ENCODE measurements at regions of chr6 and their contacts with region 1.

Region 1: DNA sequence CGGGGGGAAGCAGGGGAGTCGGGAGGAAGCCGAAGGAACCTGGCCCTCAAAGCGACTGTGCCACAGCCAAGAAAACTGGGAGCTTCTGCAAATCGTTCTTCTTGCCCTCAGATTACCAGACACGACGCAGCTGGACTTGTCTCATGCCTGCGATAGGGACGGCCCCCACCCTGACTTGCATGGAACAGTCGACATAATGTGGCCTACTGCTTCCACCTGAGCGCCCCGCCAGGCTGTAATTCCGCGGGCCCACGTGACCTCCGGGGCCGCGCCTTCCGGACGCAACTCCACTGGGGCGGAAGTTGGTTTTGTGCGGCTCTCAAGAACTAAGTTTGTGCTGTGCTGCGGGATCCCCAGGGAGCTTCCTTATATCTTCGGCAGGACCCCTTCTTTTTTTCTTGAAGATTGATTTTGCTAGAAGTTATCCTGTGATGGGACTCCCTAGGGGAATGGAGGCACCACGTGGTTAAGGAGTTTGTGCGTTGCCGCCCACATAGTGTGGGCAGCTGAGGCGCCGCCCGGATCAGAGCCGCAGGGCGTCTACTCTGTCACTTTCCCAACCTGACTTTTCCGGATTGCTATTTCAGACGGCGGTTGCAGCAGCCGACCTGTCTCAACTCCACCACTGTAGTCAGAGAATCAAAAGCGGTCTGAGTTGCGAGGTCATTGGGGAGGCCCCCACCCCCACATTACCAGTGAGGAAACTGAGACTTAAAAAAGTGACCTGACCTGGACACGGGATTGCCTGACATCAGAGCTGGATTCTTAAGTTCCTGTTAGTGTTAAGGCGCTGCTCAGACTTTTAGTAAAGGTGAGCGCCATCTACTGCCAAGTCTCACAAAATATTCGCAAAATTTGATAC is 540 bp upstream of the CD164 start:
- DNase-seq: peak; percentile 94
- H3K4me3 ChIP-seq: peak overlapping the region; percentile 33 to 99 (median 64)
- H3K27ac ChIP-seq: peak overlapping the region; percentile 97 to 100 (median 99)
- H3K4me1 ChIP-seq: peaks cover 11 to 47% (median 30%) of the 10 kb centered on the region in 4 donors
- H3K27me3 ChIP-seq: no peaks in the 10 kb centered on the region
- CTCF ChIP-seq: peak; percentile 31 to 73 (median 49)
- EP300 ChIP-seq: no peak
- POLR2A ChIP-seq: peak; percentile 73

Region 2: DNA sequence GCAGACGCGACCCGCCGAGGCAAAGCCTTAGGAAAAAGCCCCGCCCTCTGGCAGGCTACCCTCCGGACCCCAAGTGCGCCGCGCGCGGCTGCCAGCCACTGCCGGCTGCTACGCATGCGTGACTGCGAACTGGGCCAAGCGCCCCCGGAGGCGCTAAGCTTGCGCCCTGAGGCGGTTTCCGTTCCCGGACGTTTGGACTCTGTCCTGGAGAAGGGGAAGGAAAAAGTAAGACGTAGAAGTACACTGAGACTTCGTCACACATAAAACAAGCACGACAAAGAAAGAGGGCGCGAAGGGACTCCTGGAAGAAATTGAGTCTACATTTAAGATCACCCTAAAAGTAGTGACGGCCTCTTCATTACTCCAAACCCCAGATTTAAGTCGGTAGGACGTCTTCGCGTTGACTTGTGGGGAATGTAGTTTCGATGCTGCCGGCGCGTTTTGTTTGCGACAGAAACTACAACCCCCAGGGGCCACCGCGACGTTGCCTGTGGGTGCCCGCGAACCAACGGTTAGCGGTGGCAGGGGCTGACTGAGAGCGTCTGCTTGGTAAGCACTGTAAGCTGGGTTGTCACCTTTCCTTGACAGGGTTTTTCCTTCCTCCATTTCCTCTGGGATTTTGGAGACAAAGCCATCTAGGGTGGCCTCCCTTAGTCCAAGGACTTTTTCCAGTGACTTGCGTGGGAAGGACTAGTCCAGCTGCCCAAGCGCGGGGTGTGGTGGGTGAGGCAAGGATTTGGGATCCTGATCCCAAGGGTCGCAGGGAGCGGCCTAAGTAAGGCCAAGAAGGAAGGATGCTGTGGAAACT is 287.6 kb before region 1 on chr6 and contains the start of gene CEP57L1:
- in situ Hi-C with region 1: loop called in 2 of 4 experiments (anchors 10 kb)
- intact Hi-C with region 1: no loop called
- DNase-seq: peak; percentile 98
- H3K4me3 ChIP-seq: peak within 1 kb of the TSS; percentile 49 to 80 (median 67)
- H3K27ac ChIP-seq: peak within 1 kb of the TSS; percentile 95 to 100 (median 99)
- H3K4me1 ChIP-seq: peaks cover 7 to 57% (median 34%) of the 10 kb centered on the region in 4 donors
- H3K27me3 ChIP-seq: no peaks in the 10 kb centered on the region
- CTCF ChIP-seq: peak in 2 of 5 experiments; percentile 11 to 27
- EP300 ChIP-seq: no peak
- POLR2A ChIP-seq: peak; percentile 12
- total RNA-seq, gene CEP57L1: 1.9 to 29.5 (median 9.5) TPM

Region 3: GRCh38 chr6:109103942-109104341 is 278.9 kb before region 1 on chr6:
- in situ Hi-C with region 1: loop called in 2 of 4 experiments (anchors 10 kb)
- intact Hi-C with region 1: no loop called
- DNase-seq: no peak
- H3K4me3 ChIP-seq: no peak overlapping the region
- H3K27ac ChIP-seq: no peak overlapping the region
- H3K4me1 ChIP-seq: peaks cover 0 to 6% (median 0%) of the 10 kb centered on the region in 4 donors
- H3K27me3 ChIP-seq: no peaks in the 10 kb centered on the region
- CTCF ChIP-seq: no peak
- EP300 ChIP-seq: no peak
- POLR2A ChIP-seq: no peak

Region 4: GRCh38 chr6:109187399-109188114 is 195.2 kb before region 1 on chr6:
- in situ Hi-C with region 1: loop called (anchors 5 to 25 kb)
- intact Hi-C with region 1: loop called (anchors 5 kb)
- DNase-seq: peak; percentile 72
- H3K4me3 ChIP-seq: no peak overlapping the region
- H3K27ac ChIP-seq: no peak overlapping the region
- H3K4me1 ChIP-seq: peaks cover 0 to 14% (median 1%) of the 10 kb centered on the region in 4 donors
- H3K27me3 ChIP-seq: no peaks in the 10 kb centered on the region
- CTCF ChIP-seq: peak; percentile 88 to 94 (median 92)
- EP300 ChIP-seq: no peak
- POLR2A ChIP-seq: no peak

Region 5: DNA sequence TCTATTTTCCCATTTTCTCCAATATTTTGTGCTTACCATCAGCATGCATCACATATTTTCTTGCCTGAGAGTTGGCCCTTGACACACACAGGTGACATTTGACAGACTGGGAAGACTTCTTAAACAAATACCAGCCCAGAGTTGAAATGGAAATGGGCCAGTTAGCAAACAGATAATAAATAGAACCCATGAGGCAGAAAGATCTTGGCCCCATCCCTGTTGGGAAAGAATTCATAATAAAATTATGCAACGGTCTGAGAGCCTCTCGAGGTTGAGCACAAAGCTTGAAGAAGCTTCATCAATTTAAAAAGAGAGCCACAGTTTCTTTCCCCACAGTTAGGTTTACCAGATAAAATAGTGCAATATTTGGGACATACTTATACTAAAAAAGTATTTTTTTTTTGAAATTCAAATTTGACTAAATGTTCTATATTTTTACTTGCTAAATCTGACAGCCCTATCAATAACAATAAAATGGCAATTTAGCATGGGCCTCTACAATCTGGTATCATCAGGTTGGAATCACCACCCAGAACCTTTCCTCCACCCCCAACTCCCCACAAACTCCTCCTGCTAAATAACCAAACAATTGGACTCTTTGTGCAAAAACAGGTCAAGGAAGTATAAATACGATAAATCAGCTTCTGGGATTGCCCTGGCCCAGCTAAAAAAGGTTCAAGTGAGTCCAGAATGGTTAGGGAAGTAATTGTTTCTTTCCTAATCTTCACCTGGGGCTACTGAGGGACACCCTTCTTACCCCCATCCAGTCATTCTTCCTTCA is 130.4 kb before region 1 on chr6:
- in situ Hi-C with region 1: no loop called
- intact Hi-C with region 1: no loop called
- DNase-seq: no peak
- H3K4me3 ChIP-seq: no peak overlapping the region
- H3K27ac ChIP-seq: peak overlapping the region; percentile 24 to 51 (median 36)
- H3K4me1 ChIP-seq: peaks cover 10 to 50% (median 35%) of the 10 kb centered on the region in 4 donors
- H3K27me3 ChIP-seq: no peaks in the 10 kb centered on the region
- CTCF ChIP-seq: no peak
- EP300 ChIP-seq: no peak
- POLR2A ChIP-seq: no peak

Region 6: GRCh38 chr6:109455502-109456282 is 72.9 kb after region 1 on chr6 and contains the start of gene MICAL1:
- in situ Hi-C with region 1: loop called in 2 of 4 experiments (anchors 10 kb)
- intact Hi-C with region 1: no loop called
- DNase-seq: peak; percentile 90
- H3K4me3 ChIP-seq: peak within 1 kb of the TSS; percentile 44 to 89 (median 66)
- H3K27ac ChIP-seq: peak within 1 kb of the TSS; percentile 84 to 93 (median 87)
- H3K4me1 ChIP-seq: peaks cover 14 to 37% (median 33%) of the 10 kb centered on the region in 4 donors
- H3K27me3 ChIP-seq: no peaks in the 10 kb centered on the region
- CTCF ChIP-seq: peak in 4 of 5 experiments; percentile 43 to 60 (median 48)
- EP300 ChIP-seq: no peak
- POLR2A ChIP-seq: peak; percentile 63
- total RNA-seq, gene MICAL1: 85.3 to 241 (median 121) TPM